ENCODE measurements at regions of chr19 and their contacts with region 1.

Region 1: GRCh38 chr19:41255171-41255570 is 9.0 kb upstream of the HNRNPUL1 start:
- DNase-seq: no peak
- H3K4me3 ChIP-seq: no peak overlapping the region
- H3K27ac ChIP-seq: no peak overlapping the region
- H3K4me1 ChIP-seq: peaks cover 0 to 4% (median 0%) of the 10 kb centered on the region in 3 donors
- H3K27me3 ChIP-seq: no peaks in the 10 kb centered on the region
- CTCF ChIP-seq: no peak

Region 2: GRCh38 chr19:41203371-41203770 is 51.8 kb before region 1 on chr19:
- intact Hi-C with region 1: loop called (anchors 5 kb)
- DNase-seq: no peak
- H3K4me3 ChIP-seq: no peak overlapping the region
- H3K27ac ChIP-seq: no peak overlapping the region
- H3K4me1 ChIP-seq: no peaks in the 10 kb centered on the region
- H3K27me3 ChIP-seq: no peaks in the 10 kb centered on the region
- CTCF ChIP-seq: no peak

Measured in kidney (tissue), 22 donors.